Heart right ventricle (tissue), 16 donors: ENCODE measurements at regions of chr12 and their contacts with region 1.

Region 1: GRCh38 chr12:1073652-1074051 is 82.6 kb downstream of the ERC1 start:
- DNase-seq: no peak
- ATAC-seq: no peak
- H3K4me3 ChIP-seq: no peak overlapping the region
- H3K27ac ChIP-seq: no peak overlapping the region
- H3K4me1 ChIP-seq: peaks cover 0 to 48% (median 17%) of the 10 kb centered on the region in 9 donors
- H3K27me3 ChIP-seq: no peaks in the 10 kb centered on the region
- CTCF ChIP-seq: no peak

Region 2: GRCh38 chr12:1003600-1004271 is 69.9 kb before region 1 on chr12:
- intact Hi-C with region 1: loop called in 2 of 10 experiments (anchors 10 kb)
- DNase-seq: no peak
- ATAC-seq: peak in 7 of 8 donors; percentile 35 to 81 (median 65)
- H3K4me3 ChIP-seq: no peak overlapping the region
- H3K27ac ChIP-seq: peak overlapping the region in 5 of 10 donors; percentile 28 to 64 (median 55)
- H3K4me1 ChIP-seq: peaks cover 0 to 46% (median 15%) of the 10 kb centered on the region in 9 donors
- H3K27me3 ChIP-seq: no peaks in the 10 kb centered on the region
- CTCF ChIP-seq: no peak

Region 3: DNA sequence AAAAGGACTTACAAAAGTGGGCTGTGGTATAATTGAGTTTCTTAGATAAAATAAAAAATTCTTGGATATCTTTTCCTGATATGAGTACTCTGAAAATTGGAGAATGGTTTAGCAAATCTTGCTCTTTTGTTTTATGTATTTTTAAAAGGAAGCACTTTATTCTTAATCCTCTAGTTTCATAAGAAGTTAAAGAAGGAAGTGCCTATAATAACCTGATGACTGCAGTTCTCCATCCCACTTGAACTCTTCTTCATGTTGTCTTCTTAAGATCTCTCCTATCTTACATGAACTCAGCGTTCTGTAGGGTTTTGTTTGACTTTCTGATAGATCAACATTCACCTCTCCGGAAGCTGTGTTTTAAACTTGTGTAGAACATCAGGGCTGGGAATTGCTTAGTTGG is 188.4 kb after region 1 on chr12:
- intact Hi-C with region 1: no loop called
- DNase-seq: no peak
- ATAC-seq: no peak
- H3K4me3 ChIP-seq: no peak overlapping the region
- H3K27ac ChIP-seq: no peak overlapping the region
- H3K4me1 ChIP-seq: no peaks in the 10 kb centered on the region
- H3K27me3 ChIP-seq: no peaks in the 10 kb centered on the region
- CTCF ChIP-seq: no peak